Panc1 (cell line): ENCODE measurements at regions of chr9 and their contacts with region 1.

Region 1: GRCh38 chr9:98998441-98999151 is 54.9 kb downstream of the COL15A1 start:
- DNase-seq: no peak
- ATAC-seq: peak; percentile 94
- H3K4me3 ChIP-seq: no peak overlapping the region
- H3K27ac ChIP-seq: no peak overlapping the region
- H3K4me1 ChIP-seq: no peaks in the 10 kb centered on the region
- H3K27me3 ChIP-seq: no peaks in the 10 kb centered on the region
- CTCF ChIP-seq: peak; percentile 85

Region 2: GRCh38 chr9:98838155-98838867 is 160.3 kb before region 1 on chr9:
- CTCF ChIA-PET with region 1: no interaction called
- POLR2A ChIA-PET with region 1: no interaction called
- in situ Hi-C with region 1: no loop called
- intact Hi-C with region 1: no loop called
- DNase-seq: no peak
- ATAC-seq: no peak
- H3K4me3 ChIP-seq: no peak overlapping the region
- H3K27ac ChIP-seq: no peak overlapping the region
- H3K4me1 ChIP-seq: no peaks in the 10 kb centered on the region
- H3K27me3 ChIP-seq: no peaks in the 10 kb centered on the region
- CTCF ChIP-seq: no peak

Region 3: DNA sequence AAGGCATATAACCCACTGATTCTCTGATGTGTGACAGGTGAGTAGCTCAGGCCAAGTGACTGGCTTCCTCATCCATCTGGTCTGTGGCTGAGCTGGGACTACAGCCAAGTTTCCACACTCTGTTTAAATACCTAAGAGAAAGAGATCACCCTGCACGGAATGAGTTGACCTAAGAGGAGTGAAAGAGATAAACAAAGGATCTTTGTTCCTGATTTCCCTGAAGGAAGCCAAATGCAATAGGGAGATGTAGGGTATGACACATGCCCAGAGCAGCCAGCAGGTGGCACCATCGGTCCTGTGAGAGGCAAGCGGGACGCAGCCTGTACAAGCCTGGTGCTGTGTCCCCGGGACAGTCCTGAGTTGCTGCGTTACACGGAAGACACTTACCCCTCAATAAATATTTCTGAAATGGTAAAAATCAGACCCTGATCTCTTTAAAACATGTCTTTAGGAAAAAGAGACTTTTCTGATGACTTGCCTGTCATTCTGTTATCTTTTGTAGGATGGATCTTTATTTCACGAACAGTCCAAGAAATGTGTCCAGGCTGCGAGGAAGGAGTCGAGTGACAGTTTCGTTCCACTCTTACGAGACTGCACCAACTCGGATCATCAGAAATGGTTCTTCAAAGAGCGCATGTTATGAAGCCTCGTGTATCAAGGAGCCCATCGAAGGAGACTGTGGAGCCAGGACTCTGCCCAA is 150.0 kb before region 1 on chr9:
- CTCF ChIA-PET with region 1: interaction called, 4 read pairs
- POLR2A ChIA-PET with region 1: no interaction called
- in situ Hi-C with region 1: no loop called
- intact Hi-C with region 1: loop called (anchors 1 kb)
- DNase-seq: peak; percentile 70
- ATAC-seq: peak; percentile 100
- H3K4me3 ChIP-seq: peak overlapping the region in 1 of 2 experiments; percentile 33; a peak in 2 of 4 replicates
- H3K27ac ChIP-seq: no peak overlapping the region
- H3K4me1 ChIP-seq: no peaks in the 10 kb centered on the region; the same call in 1 of the 2 replicates
- H3K27me3 ChIP-seq: no peaks in the 10 kb centered on the region
- CTCF ChIP-seq: peak; percentile 88

Region 4: GRCh38 chr9:98860871-98861293 is 137.7 kb before region 1 on chr9:
- CTCF ChIA-PET with region 1: interaction called, 5 read pairs
- POLR2A ChIA-PET with region 1: no interaction called
- in situ Hi-C with region 1: no loop called
- intact Hi-C with region 1: loop called (anchors 5 kb)
- DNase-seq: peak; percentile 12
- ATAC-seq: peak; percentile 62
- H3K4me3 ChIP-seq: no peak overlapping the region
- H3K27ac ChIP-seq: no peak overlapping the region
- H3K4me1 ChIP-seq: no peaks in the 10 kb centered on the region
- H3K27me3 ChIP-seq: no peaks in the 10 kb centered on the region
- CTCF ChIP-seq: peak; percentile 51

Region 5: GRCh38 chr9:99140685-99141314 is 142.2 kb after region 1 on chr9:
- CTCF ChIA-PET with region 1: interaction called, 3 read pairs
- POLR2A ChIA-PET with region 1: no interaction called
- in situ Hi-C with region 1: no loop called
- intact Hi-C with region 1: loop called (anchors 2 kb)
- DNase-seq: peak; percentile 60
- ATAC-seq: peak; percentile 78; the same call in 1 of the 2 replicates
- H3K4me3 ChIP-seq: no peak overlapping the region
- H3K27ac ChIP-seq: no peak overlapping the region
- H3K4me1 ChIP-seq: no peaks in the 10 kb centered on the region
- H3K27me3 ChIP-seq: no peaks in the 10 kb centered on the region
- CTCF ChIP-seq: peak; percentile 86

Region 6: GRCh38 chr9:100515578-100516494 is 1517.2 kb after region 1 on chr9:
- CTCF ChIA-PET with region 1: no interaction called
- POLR2A ChIA-PET with region 1: no interaction called
- in situ Hi-C with region 1: no loop called
- intact Hi-C with region 1: no loop called
- DNase-seq: no peak
- ATAC-seq: no peak
- H3K4me3 ChIP-seq: no peak overlapping the region
- H3K27ac ChIP-seq: no peak overlapping the region
- H3K4me1 ChIP-seq: no peaks in the 10 kb centered on the region
- H3K27me3 ChIP-seq: no peaks in the 10 kb centered on the region
- CTCF ChIP-seq: no peak